Left ventricle myocardium inferior (tissue), 1 donor: ENCODE measurements at regions of chr17 and their contacts with region 1.

Region 1: DNA sequence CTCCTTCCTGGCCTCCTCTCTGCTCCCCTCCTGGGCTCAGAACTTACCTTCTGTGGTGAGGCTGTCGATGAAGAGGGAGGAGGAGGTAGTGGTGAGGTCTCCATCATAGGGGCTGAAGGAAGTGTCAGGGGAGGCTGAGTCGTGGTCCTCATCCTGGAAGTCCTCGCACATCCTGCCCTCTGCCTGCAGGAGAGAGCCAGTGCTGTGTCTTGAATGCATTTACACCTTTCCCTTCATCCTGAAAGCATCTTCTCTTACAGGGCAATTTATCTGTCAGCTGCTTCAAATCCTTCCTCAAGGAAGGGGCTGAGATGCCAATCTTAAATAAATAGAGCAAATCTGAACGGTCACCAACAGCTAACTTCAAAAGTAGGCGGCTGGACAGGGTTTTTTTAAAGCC is 73.6 kb downstream of the PLXDC1 start:
- DNase-seq: no peak
- H3K4me3 ChIP-seq: no peak overlapping the region
- H3K27ac ChIP-seq: peak overlapping the region; percentile 27
- H3K4me1 ChIP-seq: peaks cover 32% of the 10 kb centered on the region
- H3K27me3 ChIP-seq: no peaks in the 10 kb centered on the region
- CTCF ChIP-seq: no peak

Region 2: GRCh38 chr17:39026980-39027451 is 50.9 kb before region 1 on chr17:
- intact Hi-C with region 1: no loop called
- DNase-seq: peak; percentile 82
- H3K4me3 ChIP-seq: peak overlapping the region; percentile 71
- H3K27ac ChIP-seq: peak overlapping the region; percentile 16
- H3K4me1 ChIP-seq: peaks cover 18% of the 10 kb centered on the region
- H3K27me3 ChIP-seq: no peaks in the 10 kb centered on the region
- CTCF ChIP-seq: peak; percentile 38

Region 3: DNA sequence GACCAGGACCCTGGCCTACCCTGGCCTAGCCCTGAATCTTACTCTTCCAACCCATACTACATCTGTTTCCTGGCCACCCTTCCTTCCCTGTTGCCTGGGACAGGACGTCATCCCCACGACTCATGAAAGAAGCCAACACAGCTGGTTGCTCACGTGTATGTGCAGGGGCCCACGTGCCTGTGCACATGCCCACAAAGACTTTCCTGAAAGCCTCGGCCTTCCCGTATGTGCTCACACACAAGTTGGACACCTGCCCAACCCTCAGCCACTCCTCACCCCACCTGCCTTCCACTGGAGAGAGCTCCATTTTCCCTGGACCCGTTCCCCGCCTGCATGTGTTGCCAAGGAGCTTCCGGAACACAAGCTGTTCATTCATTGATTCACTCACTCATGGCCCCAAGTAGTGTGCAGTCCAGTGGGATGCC is 66.6 kb after region 1 on chr17:
- intact Hi-C with region 1: loop called (anchors 10 kb)
- DNase-seq: peak; percentile 92
- H3K4me3 ChIP-seq: no peak overlapping the region
- H3K27ac ChIP-seq: peak overlapping the region; percentile 88
- H3K4me1 ChIP-seq: peaks cover 34% of the 10 kb centered on the region
- H3K27me3 ChIP-seq: peaks cover 17% of the 10 kb centered on the region
- CTCF ChIP-seq: no peak